CD8-positive, alpha-beta T cell (primary cell): ENCODE measurements at regions of chr20 and their contacts with region 1.

Region 1: DNA sequence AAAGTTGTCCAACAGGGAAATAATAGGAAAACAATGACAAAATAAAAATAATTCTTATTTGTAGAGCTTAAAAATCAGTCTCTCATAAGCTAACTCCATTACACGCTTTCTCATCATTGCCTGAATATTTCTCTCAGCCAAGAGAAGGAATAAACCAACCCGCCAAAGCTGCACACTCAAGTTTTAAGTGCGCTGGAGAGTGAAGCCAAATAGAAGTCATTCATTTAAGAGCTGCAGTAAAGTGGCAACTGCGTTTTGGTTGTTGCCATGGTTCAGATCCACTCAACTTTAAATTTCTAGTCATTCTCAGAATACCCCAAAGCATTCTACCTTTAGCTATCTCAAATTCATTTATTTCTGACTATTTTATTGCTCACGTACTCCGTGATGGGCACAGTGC is 230.7 kb downstream of the CBLN4 start:
- DNase-seq: no peak
- ATAC-seq: no peak
- H3K4me3 ChIP-seq: no peak overlapping the region
- H3K4me3 Mint-ChIP-seq: no peak overlapping the region
- H3K27ac ChIP-seq: no peak overlapping the region
- H3K27ac Mint-ChIP-seq: no peak overlapping the region
- H3K4me1 ChIP-seq: no peaks in the 10 kb centered on the region
- H3K4me1 Mint-ChIP-seq: no peaks in the 10 kb centered on the region
- H3K27me3 ChIP-seq: no peaks in the 10 kb centered on the region
- H3K27me3 Mint-ChIP-seq: no peaks in the 10 kb centered on the region
- CTCF ChIP-seq: no peak

Region 2: GRCh38 chr20:55160037-55160436 is 614.6 kb before region 1 on chr20:
- CTCF ChIA-PET with region 1: no interaction called
- POLR2A ChIA-PET with region 1: no interaction called
- intact Hi-C with region 1: no loop called
- DNase-seq: no peak
- ATAC-seq: no peak
- H3K4me3 ChIP-seq: no peak overlapping the region
- H3K4me3 Mint-ChIP-seq: no peak overlapping the region
- H3K27ac ChIP-seq: no peak overlapping the region
- H3K27ac Mint-ChIP-seq: no peak overlapping the region
- H3K4me1 ChIP-seq: no peaks in the 10 kb centered on the region
- H3K4me1 Mint-ChIP-seq: no peaks in the 10 kb centered on the region
- H3K27me3 ChIP-seq: no peaks in the 10 kb centered on the region
- H3K27me3 Mint-ChIP-seq: no peaks in the 10 kb centered on the region
- CTCF ChIP-seq: no peak

Region 3: GRCh38 chr20:55790178-55790577 is 15.6 kb after region 1 on chr20:
- CTCF ChIA-PET with region 1: no interaction called
- POLR2A ChIA-PET with region 1: no interaction called
- intact Hi-C with region 1: loop called in 1 of 2 experiments (anchors 2 kb)
- DNase-seq: no peak
- ATAC-seq: no peak
- H3K4me3 ChIP-seq: no peak overlapping the region
- H3K4me3 Mint-ChIP-seq: no peak overlapping the region
- H3K27ac ChIP-seq: no peak overlapping the region
- H3K27ac Mint-ChIP-seq: no peak overlapping the region
- H3K4me1 ChIP-seq: no peaks in the 10 kb centered on the region
- H3K4me1 Mint-ChIP-seq: no peaks in the 10 kb centered on the region
- H3K27me3 ChIP-seq: no peaks in the 10 kb centered on the region
- H3K27me3 Mint-ChIP-seq: no peaks in the 10 kb centered on the region
- CTCF ChIP-seq: no peak

Region 4: GRCh38 chr20:57061058-57061900 is 1286.7 kb after region 1 on chr20:
- CTCF ChIA-PET with region 1: no interaction called
- POLR2A ChIA-PET with region 1: no interaction called
- intact Hi-C with region 1: no loop called
- DNase-seq: no peak
- ATAC-seq: no peak
- H3K4me3 ChIP-seq: no peak overlapping the region
- H3K4me3 Mint-ChIP-seq: no peak overlapping the region
- H3K27ac ChIP-seq: no peak overlapping the region
- H3K27ac Mint-ChIP-seq: no peak overlapping the region
- H3K4me1 ChIP-seq: no peaks in the 10 kb centered on the region
- H3K4me1 Mint-ChIP-seq: no peaks in the 10 kb centered on the region
- H3K27me3 ChIP-seq: no peaks in the 10 kb centered on the region
- H3K27me3 Mint-ChIP-seq: peaks cover 14% of the 10 kb centered on the region
- CTCF ChIP-seq: no peak